Common myeloid progenitor, CD34-positive (primary cell): ENCODE measurements at regions of chr17 and their contacts with region 1.

Region 1: GRCh38 chr17:15490634-15491261 is 23.3 kb upstream of the CDRT4 start:
- DNase-seq: peak; percentile 89 to 97 (median 94)
- H3K4me3 ChIP-seq: peak overlapping the region in 3 of 7 experiments; percentile 4 to 44 (median 42)
- H3K27ac ChIP-seq: peak overlapping the region; percentile 56 to 76
- H3K4me1 ChIP-seq: peaks cover 2 to 26% (median 17%) of the 10 kb centered on the region in 4 experiments
- H3K27me3 ChIP-seq: no peaks in the 10 kb centered on the region

Region 2: GRCh38 chr17:15257258-15257788 is 233.4 kb before region 1 on chr17:
- CTCF ChIA-PET with region 1: interaction called, 10 read pairs
- POLR2A ChIA-PET with region 1: no interaction called
- DNase-seq: peak; percentile 68 to 78 (median 77)
- H3K4me3 ChIP-seq: peak overlapping the region in 4 of 7 experiments; percentile 4 to 38 (median 20)
- H3K27ac ChIP-seq: no peak overlapping the region
- H3K4me1 ChIP-seq: peaks cover 16 to 36% (median 29%) of the 10 kb centered on the region in 4 experiments
- H3K27me3 ChIP-seq: peaks cover 0 to 38% (median 13%) of the 10 kb centered on the region in 5 experiments

Region 3: DNA sequence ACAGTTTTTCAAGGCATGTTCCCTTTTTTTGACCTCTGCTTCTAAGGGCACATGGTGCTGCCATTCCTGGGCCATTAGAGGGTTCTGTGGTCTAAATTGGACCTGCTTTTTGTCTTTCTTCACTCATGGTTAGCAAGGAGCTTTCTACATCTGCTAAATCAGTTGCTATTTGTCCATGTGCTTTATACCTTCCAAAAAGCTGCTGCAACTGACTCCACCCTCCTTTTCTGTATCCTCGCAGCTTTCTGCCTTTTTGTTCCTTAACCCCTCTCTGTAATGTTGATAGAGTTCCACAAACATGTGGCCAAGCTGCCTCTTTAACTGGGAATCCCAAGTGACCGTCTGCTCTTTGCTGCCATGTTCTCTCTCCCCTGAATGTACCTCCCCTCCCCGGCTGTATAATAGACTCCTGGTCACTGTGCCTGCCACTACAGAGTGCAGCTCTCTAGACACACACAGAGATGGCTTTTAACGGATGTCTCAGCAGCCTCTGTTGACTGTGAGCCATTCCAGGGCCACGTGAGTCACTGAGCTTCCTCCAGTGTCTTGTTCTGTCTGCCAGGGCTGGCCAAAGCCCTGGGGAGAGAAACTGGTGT is 91.9 kb before region 1 on chr17:
- CTCF ChIA-PET with region 1: no interaction called
- POLR2A ChIA-PET with region 1: no interaction called
- DNase-seq: peak in 2 of 3 donors; percentile 2 to 3
- H3K4me3 ChIP-seq: peak overlapping the region in 1 of 7 experiments; percentile 4
- H3K27ac ChIP-seq: no peak overlapping the region
- H3K4me1 ChIP-seq: peaks cover 0 to 14% (median 13%) of the 10 kb centered on the region in 4 experiments
- H3K27me3 ChIP-seq: no peaks in the 10 kb centered on the region

Region 4: DNA sequence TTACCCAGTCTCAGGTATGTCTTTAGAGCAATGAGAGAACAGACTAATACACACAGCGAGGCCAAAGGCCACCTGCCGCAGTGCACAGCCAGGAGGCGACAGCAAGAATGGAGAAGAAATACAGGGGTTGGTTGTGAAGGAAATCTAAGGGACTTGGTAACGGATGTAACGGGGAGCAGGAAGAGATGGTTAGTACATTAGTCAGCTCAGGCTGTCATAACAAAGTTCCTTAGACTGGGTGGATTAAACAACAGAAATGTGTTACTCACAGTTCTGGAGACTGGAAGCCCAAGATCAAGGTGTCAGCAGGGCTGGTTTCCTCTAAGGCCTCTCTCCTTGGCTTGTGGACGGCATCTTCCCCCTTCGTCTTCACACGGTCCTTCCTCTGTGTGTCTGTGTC is 25.4 kb after region 1 on chr17:
- CTCF ChIA-PET with region 1: no interaction called
- POLR2A ChIA-PET with region 1: no interaction called
- DNase-seq: no peak
- H3K4me3 ChIP-seq: no peak overlapping the region
- H3K27ac ChIP-seq: no peak overlapping the region
- H3K4me1 ChIP-seq: no peaks in the 10 kb centered on the region
- H3K27me3 ChIP-seq: no peaks in the 10 kb centered on the region